A673 (cell line): ENCODE measurements at regions of chr12 and their contacts with region 1.

Region 1: GRCh38 chr12:49130151-49131050 is 794 bp downstream of the TUBA1B start:
- DNase-seq: peak; percentile 94
- H3K4me3 ChIP-seq: peak overlapping the region; percentile 99
- H3K27ac ChIP-seq: peak overlapping the region; percentile 100
- H3K4me1 ChIP-seq: peaks cover 25% of the 10 kb centered on the region
- H3K27me3 ChIP-seq: no peaks in the 10 kb centered on the region
- CTCF ChIP-seq: peak; percentile 97

Region 2: DNA sequence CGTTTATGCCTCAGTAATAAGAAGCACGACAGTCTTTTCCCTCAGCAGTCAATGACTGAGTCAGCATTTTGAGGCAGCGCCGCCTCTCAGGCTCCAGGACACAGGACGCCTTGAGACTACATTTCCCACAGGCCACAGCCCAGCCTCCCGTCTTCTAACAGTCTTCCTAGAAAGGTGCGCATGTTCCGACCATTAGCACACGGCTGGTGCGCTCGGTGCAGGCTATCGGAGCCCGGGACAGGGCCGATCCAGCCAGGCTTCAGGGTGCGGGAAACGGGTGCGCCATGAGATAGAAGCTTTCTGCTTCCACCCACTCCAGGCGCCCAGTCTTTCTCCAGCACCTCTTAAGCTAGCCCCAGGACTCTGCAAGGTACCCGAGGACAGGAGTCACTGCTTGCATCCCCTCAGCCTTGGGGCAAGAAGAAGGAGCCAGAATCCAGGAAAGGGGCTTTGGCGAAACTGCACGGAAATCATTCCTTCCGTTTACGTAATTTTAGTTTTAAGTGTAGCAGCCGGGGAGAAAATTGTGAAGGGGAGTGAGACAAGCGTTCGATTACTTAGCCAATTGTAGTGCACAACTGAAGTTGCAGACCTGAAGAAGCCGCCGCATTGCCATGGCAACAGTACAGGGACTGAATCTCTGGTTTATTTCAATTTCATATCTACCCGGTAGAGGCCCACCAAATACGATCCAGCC is 833.7 kb before region 1 on chr12:
- CTCF ChIA-PET with region 1: no interaction called
- POLR2A ChIA-PET with region 1: no interaction called
- intact Hi-C with region 1: no loop called
- DNase-seq: peak; percentile 85
- H3K4me3 ChIP-seq: peak overlapping the region; percentile 50
- H3K27ac ChIP-seq: no peak overlapping the region
- H3K4me1 ChIP-seq: no peaks in the 10 kb centered on the region
- H3K27me3 ChIP-seq: no peaks in the 10 kb centered on the region
- CTCF ChIP-seq: no peak

Region 3: DNA sequence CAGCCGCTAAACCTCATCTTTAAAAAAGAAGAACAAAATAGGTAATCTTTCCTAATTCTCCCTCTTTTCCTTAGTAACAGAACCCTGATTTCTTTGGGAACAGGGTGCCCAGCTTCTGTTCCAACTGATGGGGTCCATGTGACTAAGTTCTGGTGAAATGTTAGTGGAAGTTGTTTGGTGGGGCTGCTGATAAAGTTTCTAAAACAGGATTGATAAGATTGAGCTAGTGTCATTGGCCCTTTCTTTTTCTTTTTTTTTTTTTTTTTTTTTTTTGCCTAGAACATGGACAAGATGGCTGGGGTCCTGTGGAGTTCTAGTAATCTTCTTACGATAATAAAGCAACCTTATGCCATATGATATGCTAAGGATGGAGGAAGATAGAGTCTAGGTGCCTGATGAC is 17.0 kb after region 1 on chr12:
- CTCF ChIA-PET with region 1: interaction called, 11 read pairs
- POLR2A ChIA-PET with region 1: no interaction called
- intact Hi-C with region 1: no loop called
- DNase-seq: no peak
- H3K4me3 ChIP-seq: no peak overlapping the region
- H3K27ac ChIP-seq: no peak overlapping the region
- H3K4me1 ChIP-seq: no peaks in the 10 kb centered on the region
- H3K27me3 ChIP-seq: no peaks in the 10 kb centered on the region
- CTCF ChIP-seq: no peak

Region 4: GRCh38 chr12:49188914-49189367 is 58.5 kb after region 1 on chr12 and contains the start of gene TUBA1A:
- CTCF ChIA-PET with region 1: no interaction called
- POLR2A ChIA-PET with region 1: interaction called, 3 read pairs
- intact Hi-C with region 1: loop called (anchors 2 kb)
- DNase-seq: peak; percentile 100
- H3K4me3 ChIP-seq: peak within 1 kb of the TSS; percentile 94
- H3K27ac ChIP-seq: peak within 1 kb of the TSS; percentile 89
- H3K4me1 ChIP-seq: peaks cover 21% of the 10 kb centered on the region
- H3K27me3 ChIP-seq: no peaks in the 10 kb centered on the region
- CTCF ChIP-seq: no peak
- total RNA-seq, gene TUBA1A: 421 and 504 TPM in 2 replicates

Region 5: GRCh38 chr12:49232940-49233841 is 102.8 kb after region 1 on chr12:
- CTCF ChIA-PET with region 1: interaction called, 3 read pairs
- POLR2A ChIA-PET with region 1: interaction called, 8 read pairs
- intact Hi-C with region 1: loop called (anchors 1 kb)
- DNase-seq: peak; percentile 89
- H3K4me3 ChIP-seq: peak overlapping the region; percentile 9
- H3K27ac ChIP-seq: peak overlapping the region; percentile 60
- H3K4me1 ChIP-seq: peaks cover 21% of the 10 kb centered on the region
- H3K27me3 ChIP-seq: no peaks in the 10 kb centered on the region
- CTCF ChIP-seq: peak; percentile 29; the same call in 1 of the 2 replicates

Region 6: DNA sequence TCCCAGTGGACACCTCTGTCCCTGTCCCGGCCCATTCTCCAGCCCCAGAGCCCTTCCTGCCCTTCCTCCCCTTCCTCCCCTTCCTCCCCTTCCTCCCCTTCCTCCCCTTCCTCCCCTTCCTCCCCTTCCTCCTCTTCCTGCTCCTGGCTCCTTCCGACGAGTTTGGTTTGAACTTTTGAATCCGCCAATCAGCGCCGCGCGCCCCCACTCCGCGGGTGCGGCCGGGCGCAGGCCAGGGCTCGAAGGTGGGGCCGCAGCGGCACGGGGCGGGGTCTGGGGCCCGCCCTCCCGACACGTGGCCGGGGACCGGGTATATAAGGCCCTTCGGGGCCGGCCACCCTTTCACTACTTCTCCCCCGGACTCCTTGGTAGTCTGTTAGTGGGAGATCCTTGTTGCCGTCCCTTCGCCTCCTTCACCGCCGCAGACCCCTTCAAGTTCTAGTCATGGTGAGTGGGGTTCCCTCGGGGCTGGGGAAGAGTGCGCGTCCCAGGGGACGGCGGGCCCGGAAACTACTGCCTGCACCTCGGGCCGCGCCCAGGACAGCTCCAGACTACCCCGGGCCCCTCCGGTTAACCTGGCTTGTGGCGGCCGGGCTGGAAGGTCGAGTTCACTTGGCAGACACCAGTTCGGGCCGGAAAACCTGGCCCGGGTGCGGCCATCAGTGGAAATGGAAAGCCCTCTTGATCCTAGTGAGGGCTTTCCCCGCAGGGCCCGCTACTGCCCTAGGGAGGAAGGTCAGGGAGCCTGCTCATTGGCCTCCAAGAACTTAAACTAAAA is 134.5 kb after region 1 on chr12 and contains the start of gene TUBA1C:
- CTCF ChIA-PET with region 1: no interaction called
- POLR2A ChIA-PET with region 1: interaction called, 11 read pairs
- intact Hi-C with region 1: no loop called
- DNase-seq: peak; percentile 96
- H3K4me3 ChIP-seq: peak within 1 kb of the TSS; percentile 81
- H3K27ac ChIP-seq: peak within 1 kb of the TSS; percentile 95
- H3K4me1 ChIP-seq: peaks cover 28% of the 10 kb centered on the region
- H3K27me3 ChIP-seq: no peaks in the 10 kb centered on the region
- CTCF ChIP-seq: no peak
- total RNA-seq, gene TUBA1C: 510 and 622 TPM in 2 replicates

Region 7: GRCh38 chr12:49598527-49598926 is 468.1 kb after region 1 on chr12:
- CTCF ChIA-PET with region 1: no interaction called
- POLR2A ChIA-PET with region 1: no interaction called
- intact Hi-C with region 1: no loop called
- DNase-seq: no peak
- H3K4me3 ChIP-seq: no peak overlapping the region
- H3K27ac ChIP-seq: no peak overlapping the region
- H3K4me1 ChIP-seq: no peaks in the 10 kb centered on the region
- H3K27me3 ChIP-seq: no peaks in the 10 kb centered on the region
- CTCF ChIP-seq: no peak

Region 8: GRCh38 chr12:49661191-49661590 is 530.8 kb after region 1 on chr12:
- CTCF ChIA-PET with region 1: no interaction called
- POLR2A ChIA-PET with region 1: no interaction called
- intact Hi-C with region 1: no loop called
- DNase-seq: no peak
- H3K4me3 ChIP-seq: no peak overlapping the region
- H3K27ac ChIP-seq: no peak overlapping the region
- H3K4me1 ChIP-seq: peaks cover 19% of the 10 kb centered on the region
- H3K27me3 ChIP-seq: no peaks in the 10 kb centered on the region
- CTCF ChIP-seq: no peak